ENCODE measurements at regions of chr5 and their contacts with region 1.

Region 1: DNA sequence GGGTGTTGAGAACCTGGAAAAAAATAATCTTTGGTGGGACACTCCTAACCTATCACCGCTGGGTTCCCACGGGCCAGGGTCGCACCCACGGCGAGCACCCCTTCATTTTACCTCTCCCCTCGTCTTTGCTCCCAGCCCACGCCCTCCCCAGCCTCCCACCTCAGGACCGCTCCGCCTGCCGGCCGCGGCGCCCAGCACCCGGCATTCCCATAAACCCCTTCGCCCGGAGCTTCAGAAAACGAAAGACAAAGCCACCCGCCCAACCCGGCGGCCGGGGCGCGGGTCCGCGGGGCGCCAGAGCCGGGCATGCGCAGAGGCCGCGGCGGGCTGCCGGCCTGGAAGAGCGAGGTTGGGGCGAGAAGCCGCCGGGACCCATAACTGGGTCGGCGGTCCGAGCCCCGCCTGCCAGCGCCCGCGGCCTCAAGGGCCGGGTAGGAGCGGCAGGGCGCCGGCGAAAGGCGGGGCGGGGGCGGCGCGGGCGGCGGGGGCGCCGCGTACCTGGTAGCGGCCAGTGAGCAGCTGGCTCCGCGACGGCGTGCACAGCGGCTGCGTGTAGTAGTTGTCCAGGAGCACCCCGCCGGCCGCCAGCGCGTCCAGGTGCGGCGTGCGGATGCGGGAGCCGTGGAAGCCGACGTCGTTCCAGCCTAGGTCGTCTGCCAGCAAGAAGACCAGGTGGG is 533 bp downstream of the ARSB start:
- DNase-seq: peak; percentile 77
- ATAC-seq: peak; percentile 87
- H3K4me3 ChIP-seq: peak overlapping the region; percentile 72
- H3K27ac ChIP-seq: peak overlapping the region; percentile 79
- H3K4me1 ChIP-seq: peaks cover 7% of the 10 kb centered on the region
- H3K27me3 ChIP-seq: no peaks in the 10 kb centered on the region
- CTCF ChIP-seq: peak; percentile 31; the same call in 1 of the 2 replicates
- POLR2A ChIP-seq: peak; percentile 62; the same call in 1 of the 2 replicates
- RAD21 ChIP-seq: no peak

Region 2: GRCh38 chr5:77301447-77301883 is 1683.1 kb before region 1 on chr5:
- CTCF ChIA-PET with region 1: no interaction called
- POLR2A ChIA-PET with region 1: no interaction called
- dilution Hi-C with region 1: no loop called
- in situ Hi-C with region 1: no loop called
- intact Hi-C with region 1: loop called (anchors 10 kb)
- DNase-seq: peak; percentile 85
- ATAC-seq: peak; percentile 85
- H3K4me3 ChIP-seq: no peak overlapping the region
- H3K27ac ChIP-seq: no peak overlapping the region
- H3K4me1 ChIP-seq: peaks cover 13% of the 10 kb centered on the region
- H3K27me3 ChIP-seq: no peaks in the 10 kb centered on the region
- CTCF ChIP-seq: no peak
- POLR2A ChIP-seq: no peak
- RAD21 ChIP-seq: no peak

Region 3: GRCh38 chr5:78765756-78766411 is 218.7 kb before region 1 on chr5:
- CTCF ChIA-PET with region 1: no interaction called
- POLR2A ChIA-PET with region 1: no interaction called
- dilution Hi-C with region 1: no loop called
- in situ Hi-C with region 1: no loop called
- intact Hi-C with region 1: no loop called
- DNase-seq: no peak
- ATAC-seq: no peak
- H3K4me3 ChIP-seq: no peak overlapping the region
- H3K27ac ChIP-seq: no peak overlapping the region
- H3K4me1 ChIP-seq: no peaks in the 10 kb centered on the region; the same call in 1 of the 2 replicates
- H3K27me3 ChIP-seq: peaks cover 43% of the 10 kb centered on the region
- CTCF ChIP-seq: no peak
- POLR2A ChIP-seq: no peak
- RAD21 ChIP-seq: no peak